Heart right ventricle (tissue), 16 donors: ENCODE measurements at regions of chr19 and their contacts with region 1.

Region 1: DNA sequence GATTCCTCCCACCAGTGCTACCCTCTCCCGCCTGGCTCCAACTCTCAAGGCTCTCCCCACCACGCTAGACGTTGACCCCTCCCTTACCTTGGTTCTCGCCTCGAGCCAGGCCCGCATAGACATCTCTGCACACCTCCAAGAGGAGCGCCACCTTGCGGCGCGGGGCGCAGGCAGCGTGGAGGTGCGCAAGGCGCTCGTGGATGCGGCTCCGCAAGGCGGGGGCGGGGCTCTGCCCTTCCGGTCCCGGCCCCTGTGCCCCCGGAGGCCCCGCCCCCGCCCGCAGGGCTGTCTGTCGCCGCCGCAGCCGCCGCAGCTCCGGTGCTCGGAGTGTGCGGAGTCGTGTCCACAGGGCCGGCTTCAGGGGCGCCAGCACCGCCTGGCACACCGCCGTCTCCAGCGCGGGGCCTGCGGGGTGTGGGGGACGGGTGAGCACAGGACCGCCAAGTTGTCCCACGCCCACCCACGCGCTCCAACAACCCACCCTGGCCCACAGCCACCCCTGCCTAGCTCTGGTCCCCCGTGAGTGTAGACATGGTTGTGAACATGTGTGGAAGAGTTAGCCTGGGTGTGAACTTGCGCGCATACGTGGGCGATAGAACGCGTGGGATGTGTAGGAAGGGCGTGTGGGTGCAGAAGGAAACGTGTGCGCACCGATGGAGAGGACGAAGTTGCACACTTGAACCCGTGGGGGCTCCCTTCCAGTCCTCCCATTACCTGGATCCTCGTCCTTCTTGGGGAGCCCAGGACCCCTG is 8.0 kb downstream of the RINL start:
- DNase-seq: peak; percentile 79 to 88
- ATAC-seq: peak; percentile 89 to 95 (median 92)
- H3K4me3 ChIP-seq: peak overlapping the region; percentile 32 to 74 (median 56)
- H3K27ac ChIP-seq: peak overlapping the region in 9 of 10 donors; percentile 5 to 77 (median 44)
- H3K4me1 ChIP-seq: peaks cover 0 to 33% (median 18%) of the 10 kb centered on the region in 9 donors
- H3K27me3 ChIP-seq: no peaks in the 10 kb centered on the region
- CTCF ChIP-seq: peak; percentile 70 to 92 (median 89)

Region 2: DNA sequence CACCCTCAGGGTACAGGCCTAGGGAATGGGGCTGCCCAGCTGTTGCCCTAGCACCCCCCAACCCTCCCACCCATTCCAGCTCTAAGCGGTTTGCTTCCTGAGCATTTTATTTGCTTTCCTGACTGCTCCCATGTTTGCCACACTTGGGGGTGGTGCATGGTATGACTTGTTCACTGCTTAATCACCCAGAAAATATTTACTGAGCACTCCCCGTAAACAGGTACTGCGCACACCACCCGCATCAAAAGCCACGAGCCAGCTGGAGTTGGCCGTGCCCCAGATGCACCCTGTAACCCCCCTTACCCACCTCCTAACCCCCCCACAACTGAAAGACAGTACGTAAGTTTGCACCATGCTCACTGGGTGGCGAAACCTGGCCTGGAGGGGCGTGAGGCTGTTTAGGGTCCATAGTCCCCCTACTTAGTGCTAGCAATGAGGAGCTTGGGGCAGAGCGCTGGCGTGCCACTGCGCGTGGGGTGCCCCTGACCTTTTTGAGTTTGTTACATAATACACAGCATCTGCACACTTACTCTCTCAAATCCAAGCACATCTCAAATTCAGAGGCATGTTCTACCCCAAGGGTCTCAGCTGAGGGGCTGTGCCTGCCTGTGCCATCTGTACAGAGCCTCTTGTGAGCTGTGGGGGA is 675.9 kb before region 1 on chr19:
- intact Hi-C with region 1: loop called in 1 of 10 experiments (anchors 10 kb)
- DNase-seq: no peak
- ATAC-seq: no peak
- H3K4me3 ChIP-seq: no peak overlapping the region
- H3K27ac ChIP-seq: no peak overlapping the region
- H3K4me1 ChIP-seq: peaks cover 0 to 6% (median 0%) of the 10 kb centered on the region in 9 donors
- H3K27me3 ChIP-seq: no peaks in the 10 kb centered on the region
- CTCF ChIP-seq: no peak

Region 3: DNA sequence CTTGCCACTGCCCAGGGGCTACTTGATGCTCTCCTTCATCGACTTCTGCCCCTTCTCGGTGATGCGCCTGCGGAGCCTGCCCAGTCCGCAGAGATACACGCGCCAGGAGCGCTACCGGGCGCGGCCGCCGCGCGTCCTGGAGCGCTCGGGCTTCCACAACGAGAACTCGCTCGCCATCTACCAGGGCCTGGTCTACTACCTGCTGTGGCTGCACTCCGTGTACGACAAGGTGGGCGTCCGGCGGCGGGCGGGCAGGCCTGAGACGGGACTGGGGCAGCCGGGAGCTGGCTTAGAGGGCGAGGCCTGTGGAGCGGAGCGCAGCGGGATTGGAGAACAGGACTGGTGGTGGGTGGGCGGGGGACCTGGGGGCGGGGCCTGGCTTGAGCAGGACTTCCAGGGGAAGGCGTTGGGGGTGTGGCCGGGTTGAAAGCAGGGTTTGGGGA is 508.4 kb before region 1 on chr19:
- intact Hi-C with region 1: no loop called
- DNase-seq: peak; percentile 77 to 79
- ATAC-seq: peak; percentile 85 to 94 (median 93)
- H3K4me3 ChIP-seq: peak overlapping the region; percentile 44 to 94 (median 73)
- H3K27ac ChIP-seq: peak overlapping the region in 6 of 10 donors; percentile 1 to 78 (median 64)
- H3K4me1 ChIP-seq: peaks cover 0 to 20% (median 13%) of the 10 kb centered on the region in 9 donors
- H3K27me3 ChIP-seq: peaks cover 0 to 51% (median 21%) of the 10 kb centered on the region in 7 donors
- CTCF ChIP-seq: peak in 3 of 9 donors; percentile 7 to 30 (median 12)